ENCODE measurements at regions of chr20 and their contacts with region 1.

Region 1: DNA sequence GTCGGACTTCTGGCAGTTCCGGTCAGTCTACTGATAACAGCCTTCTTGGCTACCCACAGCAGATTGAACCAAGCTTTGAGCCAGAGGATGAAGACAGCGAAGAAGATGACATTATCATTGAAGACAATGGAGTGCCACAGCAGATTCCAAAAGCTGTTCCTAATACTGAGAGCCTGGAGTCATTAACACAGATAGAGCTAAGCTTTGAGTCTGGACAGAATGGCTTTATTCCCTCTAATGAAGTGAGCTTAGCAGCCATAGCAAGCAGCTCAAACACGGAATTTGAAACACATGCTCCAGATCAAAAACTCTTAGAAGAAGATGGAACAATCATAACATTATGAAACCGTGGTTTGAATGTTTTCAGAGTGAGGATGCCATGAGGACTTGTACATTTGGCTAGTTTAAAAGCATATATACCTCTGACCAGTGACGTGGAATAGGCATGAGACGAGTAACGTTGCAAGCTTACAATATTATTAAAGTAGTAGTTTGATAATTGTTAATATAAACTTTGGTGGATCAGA is 18.8 kb downstream of the PARD6B start:
- H3K4me3 ChIP-seq: no peak overlapping the region
- H3K27ac ChIP-seq: no peak overlapping the region
- H3K4me1 ChIP-seq: peaks cover 16% of the 10 kb centered on the region
- CTCF ChIP-seq: no peak

Region 2: DNA sequence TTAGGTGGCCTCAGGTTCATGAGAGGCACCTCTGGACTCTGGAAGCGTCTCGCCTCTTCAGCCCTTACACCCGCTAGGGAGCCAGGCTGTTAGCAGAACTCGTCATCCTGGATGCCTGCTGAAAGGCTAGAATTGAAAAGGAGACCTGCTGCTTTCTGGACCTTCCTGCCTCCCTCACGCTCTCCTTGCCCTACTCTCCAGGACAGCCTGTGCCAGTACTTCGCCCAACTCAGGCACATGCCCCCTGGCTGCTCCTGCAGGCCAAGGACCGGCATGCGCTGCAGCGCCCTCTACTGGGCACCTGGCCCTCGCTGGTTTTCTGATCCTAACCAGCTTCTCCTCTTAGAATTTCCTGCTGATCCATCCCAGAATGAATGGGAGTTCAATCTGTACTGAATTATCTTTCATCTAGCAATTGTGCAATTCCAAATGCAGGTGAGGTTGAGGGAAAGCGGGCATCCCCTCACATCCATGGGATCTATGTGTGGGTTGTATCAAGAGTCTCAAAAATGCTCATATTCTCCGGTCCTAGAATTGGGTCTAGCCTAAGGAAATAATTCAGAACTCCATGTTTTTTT is 162.1 kb before region 1 on chr20:
- CTCF ChIA-PET with region 1: interaction called, 13 read pairs
- POLR2A ChIA-PET with region 1: no interaction called
- H3K4me3 ChIP-seq: no peak overlapping the region
- H3K27ac ChIP-seq: no peak overlapping the region
- H3K4me1 ChIP-seq: no peaks in the 10 kb centered on the region
- CTCF ChIP-seq: peak; percentile 91

Region 3: DNA sequence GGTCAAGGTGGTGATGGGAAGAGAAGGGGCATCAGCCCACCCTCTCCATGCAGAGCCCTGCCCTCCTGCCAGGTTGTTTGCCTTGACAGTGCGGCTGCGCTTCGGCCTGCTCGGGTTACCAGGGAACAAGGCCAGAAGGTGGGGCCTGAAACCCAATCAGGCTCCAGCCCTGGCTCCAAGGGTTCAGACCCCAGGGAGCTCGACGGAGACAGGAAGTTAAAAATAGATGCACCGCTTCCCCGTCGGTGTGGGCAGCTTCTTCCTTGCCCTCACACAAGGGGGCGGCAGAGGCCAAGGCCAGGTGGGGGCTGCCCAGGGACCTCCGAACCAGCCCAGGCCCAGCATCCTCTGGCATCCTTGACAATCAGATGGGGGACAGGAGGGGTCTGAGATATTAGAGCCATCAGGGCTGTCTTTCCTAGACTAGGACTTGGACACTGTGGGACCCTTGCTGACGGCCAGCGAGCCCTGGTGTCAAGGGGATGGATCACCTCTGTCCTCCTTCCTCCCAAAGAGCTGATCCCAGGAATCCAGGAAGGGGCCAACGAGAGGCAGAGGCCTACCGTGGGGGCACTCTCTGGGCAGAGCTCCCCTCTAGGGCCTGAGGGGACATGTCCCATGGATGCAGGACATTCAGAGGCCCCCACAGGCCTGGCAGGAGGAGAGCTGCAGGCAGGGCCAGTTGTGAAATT is 124.1 kb before region 1 on chr20:
- CTCF ChIA-PET with region 1: interaction called, 40 read pairs
- POLR2A ChIA-PET with region 1: no interaction called
- H3K4me3 ChIP-seq: no peak overlapping the region
- H3K27ac ChIP-seq: no peak overlapping the region
- H3K4me1 ChIP-seq: no peaks in the 10 kb centered on the region
- CTCF ChIP-seq: peak; percentile 77

Region 4: GRCh38 chr20:50668326-50668725 is 81.9 kb before region 1 on chr20:
- CTCF ChIA-PET with region 1: interaction called, 10 read pairs
- POLR2A ChIA-PET with region 1: no interaction called
- H3K4me3 ChIP-seq: no peak overlapping the region
- H3K27ac ChIP-seq: no peak overlapping the region
- H3K4me1 ChIP-seq: no peaks in the 10 kb centered on the region
- CTCF ChIP-seq: no peak

Region 5: GRCh38 chr20:50737352-50737751 is 12.9 kb before region 1 on chr20:
- CTCF ChIA-PET with region 1: interaction called, 14 read pairs
- POLR2A ChIA-PET with region 1: no interaction called
- H3K4me3 ChIP-seq: no peak overlapping the region
- H3K27ac ChIP-seq: no peak overlapping the region
- H3K4me1 ChIP-seq: peaks cover 11% of the 10 kb centered on the region; the same call in 1 of the 2 replicates
- CTCF ChIP-seq: no peak